Prostate gland (tissue), 2 donors: ENCODE measurements at regions of chr13 and their contacts with region 1.

Region 1: DNA sequence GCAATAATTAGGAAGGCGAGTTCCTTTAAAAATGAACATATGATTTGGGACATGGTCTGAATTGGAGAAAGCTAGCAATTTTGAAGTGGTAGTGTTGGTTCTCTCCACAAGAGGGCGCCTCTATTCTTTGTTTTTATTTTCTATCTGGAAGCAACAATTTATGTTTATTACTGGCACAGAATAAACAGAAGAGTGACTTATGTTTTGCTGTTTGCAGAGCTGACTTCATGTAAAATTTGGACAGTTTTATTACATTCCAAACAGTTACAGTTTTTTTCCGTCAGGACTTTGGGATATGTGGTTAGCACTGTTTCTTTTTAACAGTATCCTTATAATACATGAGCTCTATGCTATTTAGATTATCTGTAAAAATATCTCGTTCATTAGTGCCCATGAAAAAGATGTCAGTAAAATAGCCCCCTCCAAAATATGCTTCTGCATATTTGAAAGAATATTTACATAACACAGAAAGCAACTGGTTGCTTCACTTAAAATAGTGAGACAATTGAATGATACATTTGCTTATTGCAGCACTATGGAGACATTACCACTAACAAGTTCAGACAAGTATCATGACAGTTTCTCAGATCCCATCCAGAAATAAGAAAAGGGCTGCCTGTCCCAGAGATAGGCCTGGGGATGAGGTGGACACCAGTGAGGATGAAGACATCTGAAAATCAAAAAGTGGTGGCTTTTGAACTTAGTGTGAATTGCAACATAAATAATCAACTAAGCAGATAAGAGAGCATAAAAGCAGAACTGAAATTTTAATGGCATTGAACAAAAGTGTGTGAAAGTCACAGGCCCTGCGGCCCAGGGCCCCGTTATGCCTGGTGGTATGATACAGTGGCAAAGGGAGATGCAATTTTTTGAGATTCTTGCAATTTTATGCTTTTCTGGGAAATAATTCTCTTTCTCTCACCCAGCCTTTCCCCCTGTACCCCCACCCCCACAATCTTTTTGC is 32.3 kb upstream of the FGF9 start:
- DNase-seq: no peak
- H3K4me3 ChIP-seq: no peak overlapping the region
- H3K27ac ChIP-seq: no peak overlapping the region
- H3K4me1 ChIP-seq: no peaks in the 10 kb centered on the region
- H3K27me3 ChIP-seq: no peaks in the 10 kb centered on the region
- CTCF ChIP-seq: peak; percentile 43 to 90 (median 70)
- POLR2A ChIP-seq: no peak

Region 2: DNA sequence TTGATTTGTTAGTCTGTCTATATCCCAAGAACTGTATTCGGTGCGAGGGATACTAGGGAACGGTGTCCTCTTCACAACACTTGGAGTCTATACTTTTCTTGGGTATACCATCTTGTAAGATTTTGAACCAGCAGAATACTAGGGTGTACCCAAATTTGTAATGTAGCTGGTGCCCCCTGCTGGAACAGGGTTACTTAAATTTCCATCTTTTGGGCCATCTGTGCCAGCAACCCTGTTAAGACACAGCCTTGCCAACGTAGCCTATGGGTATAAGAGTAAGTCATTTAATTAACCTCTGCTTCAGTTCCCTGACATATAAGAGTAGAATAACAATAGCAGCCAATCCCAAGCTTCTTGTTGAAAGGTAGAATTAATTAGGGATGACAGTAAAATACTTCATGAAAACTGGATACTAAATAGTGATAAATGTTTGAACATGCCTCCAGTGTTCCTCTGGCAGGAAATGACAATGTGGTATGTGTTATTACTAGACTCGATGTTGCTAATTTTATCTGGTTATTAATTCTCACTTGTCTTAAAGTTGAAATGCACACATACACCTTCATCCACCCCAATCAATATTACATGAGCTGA is 639.8 kb after region 1 on chr13:
- intact Hi-C with region 1: loop called (anchors 1 kb)
- DNase-seq: peak; percentile 55
- H3K4me3 ChIP-seq: no peak overlapping the region
- H3K27ac ChIP-seq: no peak overlapping the region
- H3K4me1 ChIP-seq: no peaks in the 10 kb centered on the region
- H3K27me3 ChIP-seq: no peaks in the 10 kb centered on the region
- CTCF ChIP-seq: peak in 3 of 4 experiments; percentile 48 to 57 (median 55)
- POLR2A ChIP-seq: no peak

Region 3: DNA sequence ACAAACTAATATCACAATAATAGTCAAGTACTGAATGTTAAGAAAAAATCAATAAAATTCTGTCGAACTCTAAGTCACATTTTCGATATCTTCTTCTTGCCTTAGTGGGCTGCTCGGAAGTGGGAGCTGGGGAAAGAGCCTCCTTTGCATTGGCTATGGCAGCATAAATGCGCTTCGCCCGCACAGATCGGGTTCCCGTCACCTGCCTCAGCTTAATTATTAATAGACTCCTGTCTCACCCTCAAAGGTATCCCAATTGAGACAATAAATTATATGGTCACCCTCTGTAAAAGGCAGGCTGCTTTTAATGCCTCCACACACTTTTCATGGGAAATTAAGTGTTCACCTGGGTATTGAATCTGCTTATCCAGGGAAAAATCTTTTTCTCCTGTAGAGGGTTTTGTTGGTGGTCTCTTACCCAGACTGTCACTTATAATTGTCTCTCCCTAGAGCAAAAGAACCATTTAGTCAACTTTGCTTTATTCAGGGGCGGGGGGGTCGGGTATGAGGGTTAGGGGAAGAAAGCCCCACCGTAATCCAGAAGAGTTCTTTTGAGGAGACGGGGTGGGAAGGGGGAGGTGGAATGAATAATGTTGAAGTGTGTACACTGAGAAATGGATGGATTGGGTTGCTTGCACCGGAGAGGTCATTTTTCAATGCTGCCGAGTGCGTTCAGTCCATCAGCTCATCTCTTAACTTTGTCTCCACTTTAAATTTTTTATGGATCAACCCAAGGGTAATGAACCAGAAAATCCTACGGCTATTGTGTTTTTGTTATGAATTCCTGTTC is 859.6 kb after region 1 on chr13:
- intact Hi-C with region 1: no loop called
- DNase-seq: no peak
- H3K4me3 ChIP-seq: no peak overlapping the region
- H3K27ac ChIP-seq: no peak overlapping the region
- H3K4me1 ChIP-seq: no peaks in the 10 kb centered on the region
- H3K27me3 ChIP-seq: no peaks in the 10 kb centered on the region
- CTCF ChIP-seq: no peak
- POLR2A ChIP-seq: no peak

Region 4: GRCh38 chr13:22776394-22777186 is 1138.0 kb after region 1 on chr13:
- intact Hi-C with region 1: loop called (anchors 10 kb)
- DNase-seq: no peak
- H3K4me3 ChIP-seq: no peak overlapping the region
- H3K27ac ChIP-seq: no peak overlapping the region
- H3K4me1 ChIP-seq: no peaks in the 10 kb centered on the region
- H3K27me3 ChIP-seq: no peaks in the 10 kb centered on the region
- CTCF ChIP-seq: no peak
- POLR2A ChIP-seq: no peak